ENCODE measurements at regions of chr6 and their contacts with region 1.

Region 1: DNA sequence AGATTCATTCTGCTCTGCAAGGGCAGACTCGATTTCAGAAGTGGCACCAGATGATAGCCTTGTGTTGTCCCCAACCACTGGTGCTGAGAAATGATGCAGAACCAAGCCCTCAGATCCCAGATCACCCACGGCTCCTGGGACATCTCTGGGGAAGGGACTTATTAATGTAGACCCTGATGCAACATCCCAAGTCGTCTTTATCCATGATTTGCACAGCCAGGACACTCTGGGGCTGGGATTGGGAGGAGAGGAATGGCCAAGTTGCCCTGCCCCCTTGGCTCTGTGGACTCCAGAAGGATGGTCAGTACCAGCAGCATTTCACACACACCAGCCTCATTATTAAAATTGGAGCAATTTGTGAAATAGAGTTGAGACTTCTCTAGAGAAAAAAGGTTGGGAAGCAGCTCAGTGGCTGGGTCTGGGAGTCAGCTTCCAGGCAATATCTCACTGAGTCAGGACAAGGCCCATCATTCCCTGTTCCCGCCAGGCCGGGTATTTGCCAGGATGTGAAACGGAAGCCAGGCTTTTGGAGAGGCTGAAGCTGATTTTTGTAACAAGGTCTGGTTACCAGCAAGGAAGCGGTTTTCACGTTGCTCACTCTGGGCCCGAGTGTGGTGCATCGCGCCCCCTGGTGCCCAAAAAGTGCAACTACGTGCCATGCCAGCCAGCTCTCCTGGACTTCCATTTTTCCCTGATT is 67.4 kb downstream of the ZBTB2 start:
- DNase-seq: peak; percentile 72
- ATAC-seq: peak; percentile 67
- H3K4me3 ChIP-seq: no peak overlapping the region
- H3K27ac ChIP-seq: peak overlapping the region; percentile 65
- H3K4me1 ChIP-seq: peaks cover 26 to 77% of the 10 kb centered on the region in 2 experiments
- H3K27me3 ChIP-seq: no peaks in the 10 kb centered on the region
- CTCF ChIP-seq: peak; percentile 65 to 98 (median 93)
- POLR2A ChIP-seq: no peak
- RAD21 ChIP-seq: peak; percentile 97

Region 2: GRCh38 chr6:150891888-150892485 is 432.0 kb before region 1 on chr6:
- CTCF ChIA-PET with region 1: interaction called, 33 read pairs
- POLR2A ChIA-PET with region 1: interaction called, 9 read pairs
- RAD21 ChIA-PET with region 1: interaction called, 5 to 6 read pairs
- intact Hi-C with region 1: loop called (anchors 2 kb)
- DNase-seq: peak; percentile 64
- ATAC-seq: peak; percentile 77
- H3K4me3 ChIP-seq: no peak overlapping the region
- H3K27ac ChIP-seq: no peak overlapping the region
- H3K4me1 ChIP-seq: peaks cover 14 to 39% of the 10 kb centered on the region in 2 experiments; a peak in 3 of 4 replicates
- H3K27me3 ChIP-seq: no peaks in the 10 kb centered on the region
- CTCF ChIP-seq: peak; percentile 74 to 86 (median 79)
- POLR2A ChIP-seq: no peak
- RAD21 ChIP-seq: peak; percentile 91

Region 3: GRCh38 chr6:151036869-151037680 is 286.9 kb before region 1 on chr6:
- CTCF ChIA-PET with region 1: interaction called, 4 read pairs
- POLR2A ChIA-PET with region 1: interaction called, 75 read pairs
- RAD21 ChIA-PET with region 1: interaction called in 1 of 2 experiments, 4 read pairs
- intact Hi-C with region 1: no loop called
- DNase-seq: peak; percentile 64
- ATAC-seq: no peak
- H3K4me3 ChIP-seq: no peak overlapping the region
- H3K27ac ChIP-seq: peak overlapping the region; percentile 91
- H3K4me1 ChIP-seq: peaks cover 58 to 99% of the 10 kb centered on the region in 2 experiments
- H3K27me3 ChIP-seq: no peaks in the 10 kb centered on the region
- CTCF ChIP-seq: no peak
- POLR2A ChIP-seq: no peak
- RAD21 ChIP-seq: no peak

Region 4: DNA sequence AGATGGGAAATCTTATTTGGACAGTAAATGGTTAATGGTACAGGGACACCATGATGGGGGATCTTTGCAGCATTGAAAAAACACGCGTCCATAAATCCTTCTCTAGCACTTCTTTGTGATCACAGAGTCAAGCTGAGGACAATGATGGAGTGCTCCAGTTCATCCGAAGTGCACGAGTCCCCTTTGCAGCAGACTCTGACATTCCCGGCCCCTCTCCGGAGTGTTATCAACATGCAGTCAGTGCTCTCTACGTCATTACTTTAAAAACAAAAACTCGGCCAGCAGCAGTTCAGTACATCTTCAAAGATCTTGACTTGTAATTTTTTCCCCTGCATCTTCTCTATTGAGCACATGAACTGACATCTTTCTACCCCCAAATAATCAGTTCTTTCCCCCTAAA is 269.6 kb before region 1 on chr6:
- CTCF ChIA-PET with region 1: interaction called, 5 read pairs
- POLR2A ChIA-PET with region 1: interaction called, 41 read pairs
- RAD21 ChIA-PET with region 1: interaction called in 1 of 2 experiments, 3 read pairs
- intact Hi-C with region 1: no loop called
- DNase-seq: no peak
- ATAC-seq: no peak
- H3K4me3 ChIP-seq: no peak overlapping the region
- H3K27ac ChIP-seq: 0 out of 2 replicates have a peak overlapping the region, but pooled peaks have one; percentile 1
- H3K4me1 ChIP-seq: peaks cover 76 to 92% of the 10 kb centered on the region in 2 experiments
- H3K27me3 ChIP-seq: no peaks in the 10 kb centered on the region
- CTCF ChIP-seq: no peak
- POLR2A ChIP-seq: no peak
- RAD21 ChIP-seq: no peak

Region 5: GRCh38 chr6:151067684-151068596 is 256.0 kb before region 1 on chr6:
- CTCF ChIA-PET with region 1: interaction called, 6 read pairs
- POLR2A ChIA-PET with region 1: interaction called, 28 read pairs
- RAD21 ChIA-PET with region 1: interaction called, 3 to 6 read pairs
- intact Hi-C with region 1: loop called (anchors 5 kb)
- DNase-seq: peak; percentile 98
- ATAC-seq: peak; percentile 71
- H3K4me3 ChIP-seq: peak overlapping the region in 1 of 2 experiments; percentile 6; a peak in 2 of 4 replicates
- H3K27ac ChIP-seq: peak overlapping the region; percentile 100
- H3K4me1 ChIP-seq: peaks cover 80 to 94% of the 10 kb centered on the region in 2 experiments
- H3K27me3 ChIP-seq: no peaks in the 10 kb centered on the region
- CTCF ChIP-seq: no peak
- POLR2A ChIP-seq: no peak
- RAD21 ChIP-seq: no peak

Region 6: DNA sequence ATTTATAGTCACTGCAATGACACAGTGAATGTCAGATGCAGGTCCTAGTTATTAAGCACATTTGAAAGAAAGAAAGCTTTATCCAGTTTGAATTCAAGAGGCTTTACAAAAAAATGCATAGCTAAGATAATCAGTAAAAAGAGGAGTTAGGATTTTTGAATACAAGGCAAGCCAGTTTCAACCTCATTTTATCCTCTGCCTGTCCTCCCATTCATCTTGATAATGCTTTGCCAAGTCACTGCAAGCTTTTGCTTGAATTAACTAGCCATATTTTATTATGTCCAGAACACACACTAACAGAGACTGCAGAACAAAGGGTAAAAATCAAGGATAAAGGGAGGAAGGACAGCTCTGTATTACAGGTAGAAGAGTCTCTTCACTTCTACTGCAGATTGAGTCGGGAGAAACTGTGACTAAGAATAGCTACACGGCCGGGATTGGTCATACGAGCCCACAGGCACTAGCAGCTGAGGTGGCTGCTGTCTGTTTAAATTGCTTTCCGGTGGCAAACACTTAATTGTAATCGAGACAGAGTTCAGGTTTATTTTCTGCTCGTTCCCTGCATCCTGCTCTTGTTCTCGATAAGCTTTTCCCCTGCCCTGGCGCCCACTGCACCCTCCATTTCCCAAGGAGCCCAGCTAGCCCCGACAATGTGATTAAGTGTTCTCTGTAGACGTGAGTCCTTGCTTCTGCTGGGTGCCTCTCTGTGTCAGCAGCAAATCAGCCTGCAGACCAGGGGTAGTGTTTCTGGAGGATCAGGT is 114.7 kb before region 1 on chr6:
- CTCF ChIA-PET with region 1: interaction called, 7 read pairs
- POLR2A ChIA-PET with region 1: interaction called, 9 read pairs
- RAD21 ChIA-PET with region 1: interaction called in 1 of 2 experiments, 3 read pairs
- intact Hi-C with region 1: loop called (anchors 5 kb)
- DNase-seq: peak; percentile 53
- ATAC-seq: peak; percentile 78
- H3K4me3 ChIP-seq: peak overlapping the region; percentile 23 to 51
- H3K27ac ChIP-seq: peak overlapping the region; percentile 34
- H3K4me1 ChIP-seq: peaks cover 9 to 39% of the 10 kb centered on the region in 2 experiments
- H3K27me3 ChIP-seq: no peaks in the 10 kb centered on the region
- CTCF ChIP-seq: no peak
- POLR2A ChIP-seq: no peak
- RAD21 ChIP-seq: peak; percentile 24

Region 7: GRCh38 chr6:151461673-151462072 is 137.7 kb after region 1 on chr6:
- CTCF ChIA-PET with region 1: no interaction called
- POLR2A ChIA-PET with region 1: no interaction called
- RAD21 ChIA-PET with region 1: no interaction called
- intact Hi-C with region 1: no loop called
- DNase-seq: no peak
- ATAC-seq: no peak
- H3K4me3 ChIP-seq: no peak overlapping the region
- H3K27ac ChIP-seq: no peak overlapping the region
- H3K4me1 ChIP-seq: no peaks in the 10 kb centered on the region
- H3K27me3 ChIP-seq: no peaks in the 10 kb centered on the region
- CTCF ChIP-seq: no peak
- POLR2A ChIP-seq: no peak
- RAD21 ChIP-seq: no peak

Measured in HCT116 (cell line).